Sigmoid colon (tissue), 7 donors: ENCODE measurements at regions of chr12 and their contacts with region 1.

Region 1: GRCh38 chr12:109093022-109093918 is at the start of gene ALKBH2:
- DNase-seq: peak; percentile 96
- H3K4me3 ChIP-seq: peak within 1 kb of the TSS; percentile 41 to 60 (median 52)
- H3K27ac ChIP-seq: peak within 1 kb of the TSS; percentile 70 to 81 (median 76)
- H3K4me1 ChIP-seq: peaks cover 0 to 32% (median 27%) of the 10 kb centered on the region in 4 donors
- H3K27me3 ChIP-seq: no peaks in the 10 kb centered on the region
- CTCF ChIP-seq: peak; percentile 93 to 98 (median 95)
- EP300 ChIP-seq: peak in 2 of 4 donors; percentile 5 to 82
- POLR2A ChIP-seq: peak in 1 of 2 donors; percentile 17
- total RNA-seq, gene ALKBH2: 11.6 to 29.3 (median 16.5) TPM

Region 2: GRCh38 chr12:108633534-108634248 is 459.6 kb before region 1 on chr12 and contains the start of gene SELPLG:
- intact Hi-C with region 1: loop called (anchors 10 kb)
- DNase-seq: peak; percentile 81
- H3K4me3 ChIP-seq: peak within 1 kb of the TSS in 2 of 4 donors; percentile 22 to 25
- H3K27ac ChIP-seq: peak within 1 kb of the TSS; percentile 17 to 51 (median 34)
- H3K4me1 ChIP-seq: peaks cover 0 to 69% (median 50%) of the 10 kb centered on the region in 4 donors
- H3K27me3 ChIP-seq: no peaks in the 10 kb centered on the region
- CTCF ChIP-seq: no peak
- EP300 ChIP-seq: no peak
- POLR2A ChIP-seq: no peak
- total RNA-seq, gene SELPLG: 6.1 to 10.0 (median 7.6) TPM

Region 3: GRCh38 chr12:108856428-108857157 is 236.7 kb before region 1 on chr12:
- intact Hi-C with region 1: loop called (anchors 10 kb)
- DNase-seq: peak; percentile 87
- H3K4me3 ChIP-seq: peak overlapping the region; percentile 63 to 84 (median 78)
- H3K27ac ChIP-seq: peak overlapping the region; percentile 91 to 99 (median 96)
- H3K4me1 ChIP-seq: peaks cover 0 to 63% (median 55%) of the 10 kb centered on the region in 4 donors
- H3K27me3 ChIP-seq: no peaks in the 10 kb centered on the region
- CTCF ChIP-seq: no peak
- EP300 ChIP-seq: no peak
- POLR2A ChIP-seq: peak in 1 of 2 donors; percentile 22

Region 4: GRCh38 chr12:108950991-108951739 is 142.1 kb before region 1 on chr12:
- intact Hi-C with region 1: loop called (anchors 5 kb)
- DNase-seq: peak; percentile 85
- H3K4me3 ChIP-seq: no peak overlapping the region
- H3K27ac ChIP-seq: no peak overlapping the region
- H3K4me1 ChIP-seq: peaks cover 0 to 9% (median 1%) of the 10 kb centered on the region in 4 donors
- H3K27me3 ChIP-seq: no peaks in the 10 kb centered on the region
- CTCF ChIP-seq: peak; percentile 81 to 92 (median 84)
- EP300 ChIP-seq: no peak
- POLR2A ChIP-seq: no peak

Region 5: GRCh38 chr12:108967869-108968540 is 125.3 kb before region 1 on chr12:
- intact Hi-C with region 1: no loop called
- DNase-seq: no peak
- H3K4me3 ChIP-seq: no peak overlapping the region
- H3K27ac ChIP-seq: no peak overlapping the region
- H3K4me1 ChIP-seq: no peaks in the 10 kb centered on the region
- H3K27me3 ChIP-seq: no peaks in the 10 kb centered on the region
- CTCF ChIP-seq: no peak
- EP300 ChIP-seq: no peak
- POLR2A ChIP-seq: no peak

Region 6: DNA sequence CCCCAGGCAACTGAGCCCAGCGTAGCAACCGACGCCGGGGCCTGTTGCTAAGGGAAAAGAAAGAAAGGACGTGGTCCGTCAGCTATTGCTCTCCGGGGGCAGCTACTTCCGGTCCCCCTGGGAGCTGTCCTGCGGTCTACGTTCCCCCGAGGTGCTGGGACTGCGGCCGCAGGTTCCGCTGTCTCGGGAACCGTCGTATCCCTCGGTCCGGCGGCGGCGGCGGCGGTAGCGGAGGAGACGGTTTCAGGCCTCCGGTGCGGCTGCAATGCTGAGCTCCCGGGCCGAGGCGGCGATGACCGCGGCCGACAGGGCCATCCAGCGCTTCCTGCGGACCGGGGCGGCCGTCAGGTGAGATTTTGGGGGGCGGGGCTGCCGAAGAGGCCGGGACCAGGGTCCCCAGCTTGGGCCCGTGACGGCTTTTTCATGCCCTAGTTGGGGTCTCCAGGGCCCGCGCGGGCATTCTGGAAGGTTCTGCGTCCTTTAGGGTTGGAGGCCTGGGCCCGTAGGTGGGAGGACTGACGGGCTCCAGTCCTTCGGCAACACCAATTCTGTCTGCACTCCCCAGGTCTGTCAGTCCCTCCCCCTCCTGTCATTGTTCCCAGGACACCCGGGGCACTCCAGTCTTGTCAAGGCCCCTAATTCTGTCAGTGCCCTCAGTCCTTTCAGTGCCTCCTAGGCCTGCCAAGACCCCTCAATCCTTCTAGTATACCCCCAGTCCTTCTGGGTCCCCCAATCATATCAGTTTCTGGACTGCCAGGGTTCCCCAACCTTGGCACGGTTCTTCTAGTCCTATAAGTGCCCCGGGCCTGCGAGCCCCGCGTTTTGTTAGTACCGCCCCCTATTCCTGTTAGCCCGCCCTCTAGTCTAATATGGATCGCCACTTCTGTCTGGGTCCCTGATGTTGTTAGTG is 40.6 kb before region 1 on chr12 and contains the start of gene USP30:
- intact Hi-C with region 1: loop called (anchors 2 kb)
- DNase-seq: peak; percentile 93
- H3K4me3 ChIP-seq: peak within 1 kb of the TSS; percentile 74 to 99 (median 96)
- H3K27ac ChIP-seq: peak within 1 kb of the TSS; percentile 86 to 88 (median 86)
- H3K4me1 ChIP-seq: peaks cover 0 to 19% (median 15%) of the 10 kb centered on the region in 4 donors
- H3K27me3 ChIP-seq: no peaks in the 10 kb centered on the region
- CTCF ChIP-seq: no peak
- EP300 ChIP-seq: no peak
- POLR2A ChIP-seq: no peak
- total RNA-seq, gene USP30: 9.8 to 15.2 (median 13.1) TPM

Region 7: GRCh38 chr12:109573029-109573913 is 480.0 kb after region 1 on chr12 and contains the starts of genes MMAB and MVK:
- intact Hi-C with region 1: no loop called
- DNase-seq: peak; percentile 100
- H3K4me3 ChIP-seq: peak within 1 kb of the TSS; percentile 73 to 85 (median 80)
- H3K27ac ChIP-seq: peak within 1 kb of the TSS; percentile 73 to 85 (median 81)
- H3K4me1 ChIP-seq: peaks cover 0 to 20% (median 17%) of the 10 kb centered on the region in 4 donors
- H3K27me3 ChIP-seq: no peaks in the 10 kb centered on the region
- CTCF ChIP-seq: no peak
- EP300 ChIP-seq: peak in 1 of 4 donors; percentile 23
- POLR2A ChIP-seq: peak in 1 of 2 donors; percentile 58
- total RNA-seq, gene MMAB: 12.2 to 28.9 (median 23.5) TPM
- total RNA-seq, gene MVK: 9.1 to 14.8 (median 12.3) TPM